ENCODE measurements at regions of chr17 and their contacts with region 1.

Region 1: GRCh38 chr17:38444151-38444550 is 15.9 kb downstream of the ARHGAP23 start:
- DNase-seq: peak; percentile 45 to 75 (median 73)
- H3K4me3 ChIP-seq: no peak overlapping the region
- H3K27ac ChIP-seq: no peak overlapping the region
- H3K4me1 ChIP-seq: peaks cover 0 to 27% (median 25%) of the 10 kb centered on the region in 4 experiments
- H3K27me3 ChIP-seq: no peaks in the 10 kb centered on the region

Region 2: DNA sequence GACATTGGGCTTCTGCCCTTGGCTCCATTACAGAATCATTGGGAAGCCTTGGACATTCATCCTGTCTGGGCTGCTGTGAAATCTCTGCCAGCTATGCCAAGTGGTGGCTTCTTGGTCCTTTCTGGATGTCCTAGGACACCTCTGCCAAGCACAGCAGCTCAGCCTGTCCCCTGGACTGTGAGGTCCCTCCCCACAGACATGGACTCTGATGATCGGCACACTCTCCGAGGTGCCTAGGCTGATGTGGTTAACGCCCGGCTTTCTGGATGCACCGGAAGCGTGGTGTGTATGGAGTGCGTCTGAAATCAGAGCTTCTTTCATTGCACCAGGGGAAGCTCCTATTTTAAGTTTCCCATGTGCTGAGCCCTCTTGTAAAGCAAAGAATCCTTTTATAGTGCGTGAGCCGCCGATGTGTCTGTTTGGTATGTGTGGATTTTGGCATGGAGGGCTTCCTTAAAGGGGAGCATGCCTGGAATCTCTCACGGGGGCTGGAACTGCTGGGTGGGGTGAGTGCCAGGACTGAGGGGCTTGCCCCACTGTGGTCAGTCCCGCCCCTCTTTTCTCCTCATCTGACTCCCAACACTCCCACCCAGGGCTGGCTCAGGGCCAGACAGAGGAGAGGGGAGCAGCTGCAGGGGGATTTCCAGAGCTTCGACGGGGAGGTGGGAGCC is 22.8 kb before region 1 on chr17:
- CTCF ChIA-PET with region 1: interaction called, 35 read pairs
- POLR2A ChIA-PET with region 1: no interaction called
- DNase-seq: no peak
- H3K4me3 ChIP-seq: no peak overlapping the region
- H3K27ac ChIP-seq: no peak overlapping the region
- H3K4me1 ChIP-seq: peaks cover 0 to 40% (median 35%) of the 10 kb centered on the region in 4 experiments
- H3K27me3 ChIP-seq: peaks cover 3 to 50% (median 31%) of the 10 kb centered on the region in 5 experiments

Region 3: DNA sequence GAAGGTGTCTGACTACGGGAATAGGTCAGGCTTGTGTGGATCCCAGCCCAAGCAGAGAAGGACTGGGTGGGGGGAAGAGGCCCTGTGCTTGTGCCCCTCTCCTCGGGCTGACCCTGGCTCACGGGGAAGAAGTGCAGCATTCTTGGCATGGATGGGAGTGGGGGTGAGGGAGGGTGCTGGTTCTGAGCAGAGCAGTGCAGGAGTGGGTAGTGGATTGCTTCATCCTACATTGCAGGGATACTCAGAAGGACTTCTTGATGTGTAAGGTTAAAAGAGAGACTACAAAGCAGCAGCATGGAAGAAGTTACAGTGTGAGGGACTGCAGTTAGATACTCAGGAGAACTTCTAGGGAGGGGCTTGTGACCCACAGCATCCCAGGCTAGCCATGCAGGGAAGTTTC is 13.8 kb before region 1 on chr17:
- CTCF ChIA-PET with region 1: interaction called, 35 read pairs
- POLR2A ChIA-PET with region 1: interaction called, 5 read pairs
- DNase-seq: no peak
- H3K4me3 ChIP-seq: peak overlapping the region in 2 of 7 experiments; percentile 1 to 85
- H3K27ac ChIP-seq: no peak overlapping the region
- H3K4me1 ChIP-seq: peaks cover 3 to 43% (median 41%) of the 10 kb centered on the region in 4 experiments
- H3K27me3 ChIP-seq: no peaks in the 10 kb centered on the region

Region 4: DNA sequence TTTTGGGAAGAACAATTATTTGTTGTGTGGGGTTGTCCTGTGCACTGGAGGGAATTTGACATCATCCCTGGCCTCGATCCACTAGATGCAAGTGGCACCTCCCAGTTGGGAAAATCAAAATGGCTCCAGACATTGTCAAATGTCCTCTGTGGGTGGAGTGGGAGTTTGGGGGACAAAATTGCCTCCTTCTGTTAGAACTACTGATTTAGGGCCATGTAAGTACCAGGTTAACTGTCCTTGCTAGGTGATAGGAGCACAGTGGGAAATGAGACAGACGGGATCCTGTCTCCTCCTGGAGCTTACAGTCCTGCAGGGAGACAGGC is 41.0 kb after region 1 on chr17:
- CTCF ChIA-PET with region 1: interaction called, 10 read pairs
- POLR2A ChIA-PET with region 1: no interaction called
- DNase-seq: no peak
- H3K4me3 ChIP-seq: no peak overlapping the region
- H3K27ac ChIP-seq: no peak overlapping the region
- H3K4me1 ChIP-seq: peaks cover 0 to 2% (median 0%) of the 10 kb centered on the region in 4 experiments
- H3K27me3 ChIP-seq: no peaks in the 10 kb centered on the region

Measured in common myeloid progenitor, CD34-positive (primary cell).